ENCODE measurements at regions of chr4 and their contacts with region 1.

Region 1: DNA sequence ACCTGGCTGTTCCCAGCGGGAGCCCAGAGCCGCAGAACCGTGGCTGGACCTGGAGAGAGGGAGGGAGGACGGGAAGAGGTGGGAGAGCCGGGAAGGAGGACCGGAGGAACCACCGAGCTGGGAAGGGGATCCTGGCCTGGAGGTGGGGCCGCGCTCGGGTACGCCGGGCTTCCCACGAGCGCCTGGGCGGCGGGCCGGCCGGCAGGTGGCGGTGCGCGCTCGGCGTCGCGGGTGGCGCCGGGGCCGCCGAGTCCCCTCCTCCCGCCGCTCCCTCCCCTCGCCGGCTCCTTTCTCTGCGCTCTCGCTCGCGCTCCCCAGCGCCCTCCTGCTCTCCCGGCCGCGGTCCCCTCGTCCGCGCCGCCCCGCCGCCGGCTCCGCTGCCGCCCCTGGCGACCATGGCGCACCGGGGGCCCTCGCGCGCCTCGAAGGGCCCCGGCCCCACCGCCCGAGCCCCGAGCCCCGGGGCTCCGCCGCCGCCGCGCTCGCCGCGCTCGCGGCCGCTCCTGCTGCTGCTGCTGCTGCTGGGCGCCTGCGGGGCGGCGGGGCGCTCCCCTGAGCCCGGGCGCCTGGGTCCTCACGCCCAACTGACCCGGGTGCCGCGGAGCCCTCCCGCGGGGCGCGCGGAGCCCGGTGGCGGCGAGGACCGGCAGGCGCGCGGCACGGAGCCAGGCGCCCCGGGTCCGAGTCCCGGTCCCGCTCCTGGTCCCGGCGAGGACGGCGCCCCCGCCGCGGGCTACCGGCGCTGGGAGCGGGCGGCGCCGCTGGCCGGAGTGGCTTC is at the start of gene SORCS2:
- DNase-seq: peak; percentile 34 to 69 (median 65)
- H3K4me3 ChIP-seq: peak within 1 kb of the TSS in 1 of 4 donors; percentile 52
- H3K27ac ChIP-seq: no peak within 1 kb of the TSS
- H3K4me1 ChIP-seq: no peaks in the 10 kb centered on the region
- H3K27me3 ChIP-seq: peaks cover 23% of the 10 kb centered on the region
- CTCF ChIP-seq: peak in 4 of 6 experiments; percentile 26 to 88 (median 80)
- POLR2A ChIP-seq: no peak
- total RNA-seq, gene SORCS2: 1.1 to 15.5 (median 1.5) TPM

Region 2: DNA sequence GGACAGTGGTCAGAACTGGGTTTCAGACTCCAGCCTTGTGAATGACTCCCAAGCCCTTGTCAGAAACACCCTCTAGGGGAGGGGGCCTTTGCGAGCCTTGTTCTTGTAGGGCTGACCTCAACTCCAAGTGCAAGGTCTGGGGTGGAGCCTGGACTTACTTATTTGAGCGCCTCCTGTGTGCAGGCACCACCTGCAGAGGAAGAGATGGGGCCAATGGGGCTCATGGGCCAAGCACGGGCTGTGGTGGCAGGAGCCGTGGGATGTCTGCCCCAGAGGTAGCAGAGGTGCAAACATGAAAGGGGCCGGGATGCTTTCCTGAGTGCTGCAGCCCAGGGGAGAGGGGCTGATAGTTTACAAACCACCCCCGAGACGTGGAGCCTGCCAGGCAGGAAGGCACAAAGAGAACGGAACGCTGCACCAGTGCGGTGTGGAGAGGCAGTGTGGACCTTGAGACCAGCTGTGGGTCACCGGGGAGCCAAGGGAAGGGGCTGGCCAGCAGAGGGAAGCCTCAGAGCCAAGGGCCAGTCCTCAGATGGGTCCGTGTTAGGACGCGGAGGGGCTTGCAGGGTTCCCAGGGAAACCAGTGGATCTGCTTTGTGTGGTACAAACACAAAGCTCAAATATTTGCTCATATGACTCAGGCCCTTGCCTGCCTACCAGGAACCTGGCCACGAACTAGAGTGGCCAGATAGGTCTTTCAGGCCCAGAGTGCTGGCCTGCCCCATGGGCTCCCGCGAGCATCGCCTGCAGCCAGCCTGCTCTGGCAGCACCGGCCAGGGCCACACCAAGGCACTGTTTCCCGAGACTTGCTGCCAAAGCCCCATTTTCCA is 158.0 kb before region 1 on chr4:
- intact Hi-C with region 1: no loop called
- DNase-seq: peak in 2 of 7 donors; percentile 51 to 55
- H3K4me3 ChIP-seq: no peak overlapping the region
- H3K27ac ChIP-seq: peak overlapping the region in 2 of 5 donors; percentile 7 to 57
- H3K4me1 ChIP-seq: no peaks in the 10 kb centered on the region
- H3K27me3 ChIP-seq: no peaks in the 10 kb centered on the region
- CTCF ChIP-seq: no peak
- POLR2A ChIP-seq: no peak

Region 3: GRCh38 chr4:7295911-7296660 is 103.6 kb after region 1 on chr4:
- intact Hi-C with region 1: loop called (anchors 5 kb)
- DNase-seq: peak in 6 of 7 donors; percentile 13 to 54 (median 26)
- H3K4me3 ChIP-seq: no peak overlapping the region
- H3K27ac ChIP-seq: no peak overlapping the region
- H3K4me1 ChIP-seq: no peaks in the 10 kb centered on the region
- H3K27me3 ChIP-seq: peaks cover 6% of the 10 kb centered on the region
- CTCF ChIP-seq: peak in 5 of 6 experiments; percentile 17 to 53 (median 50)
- POLR2A ChIP-seq: no peak

Region 4: GRCh38 chr4:7335344-7336069 is 143.1 kb after region 1 on chr4:
- intact Hi-C with region 1: loop called in 1 of 2 experiments (anchors 5 kb)
- DNase-seq: peak; percentile 33 to 76 (median 64)
- H3K4me3 ChIP-seq: no peak overlapping the region
- H3K27ac ChIP-seq: no peak overlapping the region
- H3K4me1 ChIP-seq: no peaks in the 10 kb centered on the region
- H3K27me3 ChIP-seq: no peaks in the 10 kb centered on the region
- CTCF ChIP-seq: peak; percentile 39 to 73 (median 52)
- POLR2A ChIP-seq: no peak

Region 5: DNA sequence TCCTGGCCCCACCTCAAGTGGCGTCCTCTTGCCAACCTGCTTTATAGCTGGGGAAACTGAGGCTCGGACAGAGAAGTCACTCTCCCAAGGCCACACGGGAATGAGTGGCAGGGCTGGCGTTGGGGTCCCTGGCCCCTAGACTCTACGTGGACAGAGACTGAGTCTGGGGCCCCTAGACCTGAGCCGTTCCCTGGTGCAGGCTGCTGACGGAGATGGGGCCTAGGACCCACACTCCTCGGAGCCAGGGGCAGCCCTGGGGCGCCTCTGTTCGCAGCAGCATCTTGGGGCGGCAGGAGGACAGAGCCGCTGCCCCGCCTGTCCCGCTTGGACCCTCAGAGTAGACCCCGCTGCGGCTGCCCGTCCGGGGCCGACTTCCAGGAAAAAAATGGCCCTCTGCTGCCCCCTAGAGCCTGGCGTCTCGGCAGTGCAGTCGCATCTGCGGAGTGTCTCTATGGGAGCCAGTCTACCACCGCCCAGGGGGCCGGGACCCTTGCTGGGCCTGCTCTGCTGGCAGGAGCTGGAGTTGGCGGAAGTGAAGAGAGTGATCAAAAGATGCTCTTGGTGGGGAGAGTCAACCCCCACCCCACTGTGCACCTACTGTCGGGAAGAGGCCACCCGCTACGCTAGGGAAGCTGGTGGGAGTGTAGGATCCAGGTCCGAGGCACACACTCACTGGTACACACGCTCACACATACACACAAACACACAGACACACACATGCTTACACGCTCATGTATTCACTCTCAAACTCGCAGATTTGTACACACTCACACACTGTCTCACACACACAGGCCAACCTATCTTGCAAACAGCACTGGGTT is 527.1 kb after region 1 on chr4:
- intact Hi-C with region 1: loop called (anchors 5 kb)
- DNase-seq: peak in 6 of 7 donors; percentile 49 to 67 (median 62)
- H3K4me3 ChIP-seq: no peak overlapping the region
- H3K27ac ChIP-seq: no peak overlapping the region
- H3K4me1 ChIP-seq: no peaks in the 10 kb centered on the region
- H3K27me3 ChIP-seq: peaks cover 14% of the 10 kb centered on the region
- CTCF ChIP-seq: peak; percentile 58 to 80 (median 72)
- POLR2A ChIP-seq: no peak

Measured in adrenal gland (tissue), 19 donors.